ENCODE measurements at regions of chr22 and their contacts with region 1.

Region 1: GRCh38 chr22:32080904-32081303 is 37.8 kb downstream of the SLC5A1 start:
- DNase-seq: no peak
- H3K4me3 ChIP-seq: no peak overlapping the region
- H3K27ac ChIP-seq: no peak overlapping the region
- H3K4me1 ChIP-seq: no peaks in the 10 kb centered on the region
- H3K27me3 ChIP-seq: peaks cover 0 to 4% (median 0%) of the 10 kb centered on the region in 4 donors
- CTCF ChIP-seq: peak in 5 of 6 experiments; percentile 56 to 84 (median 75)
- POLR2A ChIP-seq: no peak

Region 2: DNA sequence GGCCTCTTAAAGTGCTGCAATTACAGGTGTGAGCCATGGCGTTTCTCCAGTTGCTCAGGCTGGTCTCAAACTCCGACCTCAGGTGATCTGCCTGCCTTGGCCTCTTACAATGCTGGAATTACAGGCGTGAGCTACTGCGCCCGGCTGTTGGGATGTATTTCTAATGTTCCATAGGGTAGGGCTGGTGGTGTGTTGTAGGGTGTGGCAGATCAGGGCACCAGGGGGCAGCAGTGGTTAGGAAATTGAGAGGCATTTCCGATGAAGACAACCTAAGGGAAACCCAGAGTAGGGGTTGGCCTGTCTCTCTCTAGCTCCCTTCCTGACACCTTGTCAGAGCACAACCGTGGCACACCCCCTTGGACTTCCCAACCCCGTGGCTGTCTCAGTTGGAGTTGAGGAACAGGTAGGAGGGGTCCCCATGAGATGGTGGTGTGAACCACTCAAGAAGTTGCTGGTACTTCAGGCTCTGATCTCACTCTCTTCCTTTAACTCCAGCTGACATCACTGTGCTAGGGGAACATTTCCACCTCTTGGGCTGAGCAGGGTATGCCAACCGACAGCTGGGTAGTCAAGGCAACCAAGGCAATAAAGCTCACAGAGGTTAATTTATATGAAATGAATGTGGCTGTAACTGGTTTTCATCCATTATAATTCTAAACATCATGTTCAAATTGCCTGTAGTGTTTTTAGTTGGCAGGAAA is 103.6 kb before region 1 on chr22:
- intact Hi-C with region 1: loop called (anchors 5 kb)
- DNase-seq: no peak
- H3K4me3 ChIP-seq: no peak overlapping the region
- H3K27ac ChIP-seq: no peak overlapping the region
- H3K4me1 ChIP-seq: no peaks in the 10 kb centered on the region
- H3K27me3 ChIP-seq: no peaks in the 10 kb centered on the region
- CTCF ChIP-seq: peak; percentile 55 to 86 (median 70)
- POLR2A ChIP-seq: no peak

Measured in esophagus squamous epithelium (tissue), 5 donors.